Sigmoid colon (tissue), 7 donors: ENCODE measurements at regions of chr9 and their contacts with region 1.

Region 1: DNA sequence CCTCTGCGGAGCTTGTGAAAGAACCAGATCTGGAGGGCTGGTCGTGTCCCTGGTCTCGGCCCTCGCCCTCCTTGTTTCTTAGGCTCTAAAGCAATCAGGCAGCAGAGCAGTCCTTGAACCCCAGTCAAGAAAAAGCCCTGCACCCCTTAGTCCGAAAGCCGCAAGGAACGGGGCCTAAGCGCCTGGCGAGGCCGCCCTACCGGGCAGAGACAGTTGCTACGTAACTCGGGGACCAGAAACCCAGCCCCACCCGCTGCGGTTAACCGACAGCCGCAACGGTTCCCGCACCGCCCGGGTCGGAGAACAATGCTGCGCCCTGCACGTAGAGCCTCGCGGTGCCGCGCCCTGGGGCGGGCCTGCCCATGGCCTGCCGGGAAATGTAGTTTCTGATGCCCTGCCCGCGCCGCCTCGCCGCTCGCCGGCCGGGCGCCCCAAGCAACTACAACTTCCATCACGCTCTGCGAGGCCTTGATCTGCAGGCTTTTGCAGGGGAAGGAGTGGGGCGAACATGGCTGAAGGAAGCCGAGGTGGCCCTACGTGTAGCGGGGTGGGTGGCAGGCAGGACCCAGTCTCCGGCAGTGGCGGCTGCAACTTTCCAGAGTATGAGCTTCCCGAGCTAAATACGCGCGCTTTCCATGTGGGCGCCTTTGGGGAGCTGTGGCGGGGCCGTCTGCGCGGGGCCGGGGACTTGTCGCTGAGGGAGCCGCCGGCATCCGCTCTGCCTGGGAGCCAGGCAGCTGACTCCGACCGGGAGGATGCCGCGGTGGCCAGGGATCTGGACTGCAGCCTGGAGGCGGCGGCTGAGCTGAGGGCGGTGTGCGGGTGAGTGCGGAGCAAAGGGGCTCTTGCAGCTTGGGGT is at the start of gene SNAPC3:
- DNase-seq: peak; percentile 96
- H3K4me3 ChIP-seq: peak within 1 kb of the TSS; percentile 90 to 94 (median 90)
- H3K27ac ChIP-seq: peak within 1 kb of the TSS; percentile 85 to 94 (median 92)
- H3K4me1 ChIP-seq: peaks cover 0 to 38% (median 20%) of the 10 kb centered on the region in 4 donors
- H3K27me3 ChIP-seq: no peaks in the 10 kb centered on the region
- CTCF ChIP-seq: peak in 2 of 4 experiments; percentile 20 to 21
- EP300 ChIP-seq: peak in 2 of 4 donors; percentile 32 to 53
- POLR2A ChIP-seq: peak; percentile 31 to 60
- total RNA-seq, gene SNAPC3: 28.4 to 41.5 (median 32.5) TPM

Region 2: DNA sequence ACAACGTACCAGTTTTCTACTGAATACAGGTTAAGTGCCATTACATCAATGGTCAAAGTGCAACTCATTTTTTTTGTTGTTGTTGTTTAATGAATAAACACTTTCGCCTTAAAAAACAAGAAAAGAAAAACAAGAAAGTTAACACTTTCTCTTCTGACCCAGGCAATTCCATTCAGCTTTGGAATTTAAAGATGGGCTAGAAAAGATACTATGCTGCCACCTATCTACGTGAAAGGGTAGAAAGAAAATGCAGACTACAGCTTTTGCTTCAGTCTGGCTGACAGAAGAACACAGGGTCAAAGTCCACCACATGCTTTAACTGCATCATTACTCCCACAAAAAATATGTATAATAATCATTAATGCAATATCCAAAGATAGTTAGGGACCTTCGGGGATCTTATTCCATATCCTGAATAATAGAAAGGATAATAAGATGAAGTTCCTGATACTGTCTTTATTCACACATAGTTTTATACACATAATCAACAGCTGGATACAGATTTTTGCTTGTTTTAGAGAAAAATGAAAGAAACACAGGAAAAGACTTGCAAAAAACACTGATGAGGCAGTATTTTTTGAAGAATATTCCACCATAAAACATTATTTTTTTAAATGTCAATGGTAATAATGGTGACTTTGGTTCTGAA is 769.7 kb before region 1 on chr9:
- intact Hi-C with region 1: no loop called
- DNase-seq: no peak
- H3K4me3 ChIP-seq: no peak overlapping the region
- H3K27ac ChIP-seq: no peak overlapping the region
- H3K4me1 ChIP-seq: peaks cover 0 to 15% (median 3%) of the 10 kb centered on the region in 4 donors
- H3K27me3 ChIP-seq: no peaks in the 10 kb centered on the region
- CTCF ChIP-seq: peak; percentile 23 to 33 (median 26)
- EP300 ChIP-seq: no peak
- POLR2A ChIP-seq: no peak

Region 3: GRCh38 chr9:14912859-14913258 is 509.7 kb before region 1 on chr9:
- intact Hi-C with region 1: no loop called
- DNase-seq: no peak
- H3K4me3 ChIP-seq: no peak overlapping the region
- H3K27ac ChIP-seq: no peak overlapping the region
- H3K4me1 ChIP-seq: peaks cover 0 to 30% (median 17%) of the 10 kb centered on the region in 4 donors
- H3K27me3 ChIP-seq: no peaks in the 10 kb centered on the region
- CTCF ChIP-seq: no peak
- EP300 ChIP-seq: no peak
- POLR2A ChIP-seq: no peak

Region 4: DNA sequence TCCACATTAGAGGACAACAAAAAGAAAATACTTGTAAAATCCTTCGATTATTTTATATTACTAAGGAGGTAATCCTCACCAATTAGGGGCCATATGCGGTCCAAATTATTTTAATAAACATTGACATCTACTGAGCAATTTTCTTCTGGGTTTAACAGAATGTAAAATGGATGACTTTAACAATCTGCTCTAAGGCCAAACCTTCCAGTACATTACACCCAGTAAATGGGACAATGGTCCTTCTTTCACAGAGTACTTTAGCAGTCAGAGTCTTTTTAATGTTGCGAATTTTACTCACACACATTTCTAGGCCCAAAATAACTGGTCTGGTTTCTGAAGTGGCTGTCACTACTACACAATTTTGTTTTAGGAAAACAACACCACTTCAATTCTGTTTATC is 222.5 kb before region 1 on chr9:
- intact Hi-C with region 1: no loop called
- DNase-seq: no peak
- H3K4me3 ChIP-seq: no peak overlapping the region
- H3K27ac ChIP-seq: no peak overlapping the region
- H3K4me1 ChIP-seq: no peaks in the 10 kb centered on the region
- H3K27me3 ChIP-seq: no peaks in the 10 kb centered on the region
- CTCF ChIP-seq: no peak
- EP300 ChIP-seq: no peak
- POLR2A ChIP-seq: no peak

Region 5: GRCh38 chr9:15211160-15211814 is 211.3 kb before region 1 on chr9:
- intact Hi-C with region 1: loop called (anchors 2 kb)
- DNase-seq: peak; percentile 80
- H3K4me3 ChIP-seq: no peak overlapping the region
- H3K27ac ChIP-seq: peak overlapping the region; percentile 25 to 43 (median 28)
- H3K4me1 ChIP-seq: peaks cover 0 to 14% (median 4%) of the 10 kb centered on the region in 4 donors
- H3K27me3 ChIP-seq: no peaks in the 10 kb centered on the region
- CTCF ChIP-seq: peak; percentile 37 to 93 (median 85)
- EP300 ChIP-seq: peak in 1 of 4 donors; percentile 72
- POLR2A ChIP-seq: no peak

Region 6: DNA sequence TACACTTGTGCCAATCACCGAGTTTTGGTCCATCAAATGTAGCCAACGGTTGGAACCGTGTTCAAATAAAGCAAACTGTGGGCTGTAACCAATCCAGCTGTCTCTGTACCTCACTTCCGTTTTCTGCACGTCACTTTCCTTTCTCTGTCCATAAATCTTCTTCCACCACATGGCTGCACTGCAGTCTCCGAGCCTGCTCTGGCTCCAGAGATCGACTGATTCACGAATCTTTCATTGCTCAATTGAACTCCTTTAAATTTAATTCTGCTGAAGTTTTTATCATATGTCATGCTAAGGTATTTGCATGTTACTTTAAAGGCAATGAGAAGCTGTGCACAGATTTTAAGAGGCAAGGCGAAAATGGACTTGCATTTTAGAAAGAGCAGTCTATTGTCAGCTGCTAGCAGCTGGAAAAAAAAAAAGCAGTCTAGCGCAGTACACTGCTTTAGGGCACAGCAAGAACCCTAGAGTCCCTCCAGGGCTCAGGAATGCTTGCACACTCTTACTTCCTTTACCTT is 128.7 kb before region 1 on chr9:
- intact Hi-C with region 1: loop called (anchors 5 kb)
- DNase-seq: no peak
- H3K4me3 ChIP-seq: peak overlapping the region in 2 of 4 donors; percentile 11 to 21
- H3K27ac ChIP-seq: peak overlapping the region; percentile 81 to 83 (median 82)
- H3K4me1 ChIP-seq: peaks cover 0 to 38% (median 31%) of the 10 kb centered on the region in 4 donors
- H3K27me3 ChIP-seq: no peaks in the 10 kb centered on the region
- CTCF ChIP-seq: no peak
- EP300 ChIP-seq: no peak
- POLR2A ChIP-seq: no peak

Region 7: DNA sequence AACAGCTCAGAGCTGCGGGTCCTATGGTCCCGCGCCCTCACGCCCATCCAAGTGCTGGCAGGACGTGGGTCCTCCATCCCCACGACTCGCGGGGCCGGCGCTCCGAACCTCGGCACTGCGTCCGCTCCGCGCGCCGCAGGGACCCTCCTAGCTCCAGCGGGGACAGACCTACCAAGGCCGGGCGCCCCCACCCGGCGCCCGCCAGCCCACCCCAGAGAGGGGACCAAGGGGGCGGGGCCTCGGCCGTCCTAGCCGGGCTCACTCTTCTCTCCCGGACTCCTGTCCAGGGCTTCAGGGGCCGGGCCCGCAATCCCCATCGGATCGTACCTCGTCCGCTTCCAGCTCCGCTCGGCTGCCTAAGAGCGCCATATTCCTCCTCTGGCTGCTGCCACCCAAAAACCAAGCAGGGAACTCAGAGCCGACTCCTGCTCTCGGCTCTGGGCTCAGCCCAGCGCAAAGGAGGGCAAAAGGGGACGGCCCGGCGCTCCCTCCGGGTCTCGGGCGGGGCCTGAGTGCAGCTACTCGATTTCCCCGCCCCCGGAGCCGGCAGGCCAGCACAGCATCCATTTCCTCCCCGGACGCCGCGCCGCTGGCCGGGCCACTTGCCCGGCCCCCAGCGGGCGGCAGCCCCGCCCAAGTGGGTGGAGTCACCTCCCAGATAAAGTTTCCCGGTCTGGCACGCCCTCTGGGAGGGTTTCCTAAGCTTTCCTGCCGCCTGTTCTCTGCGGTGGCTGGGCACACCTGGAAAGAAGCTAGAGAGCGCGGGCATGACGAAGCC is 115.7 kb before region 1 on chr9 and contains the start of gene TTC39B:
- intact Hi-C with region 1: loop called (anchors 2 kb)
- DNase-seq: peak; percentile 96
- H3K4me3 ChIP-seq: peak within 1 kb of the TSS; percentile 91 to 97 (median 92)
- H3K27ac ChIP-seq: peak within 1 kb of the TSS; percentile 93 to 94 (median 93)
- H3K4me1 ChIP-seq: peaks cover 0 to 20% (median 4%) of the 10 kb centered on the region in 4 donors
- H3K27me3 ChIP-seq: no peaks in the 10 kb centered on the region
- CTCF ChIP-seq: no peak
- EP300 ChIP-seq: no peak
- POLR2A ChIP-seq: peak; percentile 80 to 84
- total RNA-seq, gene TTC39B: 9.1 to 15.8 (median 13.8) TPM

Region 8: GRCh38 chr9:15510789-15511575 is 88.4 kb after region 1 on chr9 and contains the start of gene PSIP1:
- intact Hi-C with region 1: loop called (anchors 5 kb)
- DNase-seq: peak; percentile 81
- H3K4me3 ChIP-seq: peak within 1 kb of the TSS; percentile 81 to 99 (median 96)
- H3K27ac ChIP-seq: peak within 1 kb of the TSS; percentile 88 to 96 (median 90)
- H3K4me1 ChIP-seq: peaks cover 0 to 27% (median 22%) of the 10 kb centered on the region in 4 donors
- H3K27me3 ChIP-seq: no peaks in the 10 kb centered on the region
- CTCF ChIP-seq: peak in 3 of 4 experiments; percentile 25 to 42 (median 40)
- EP300 ChIP-seq: no peak
- POLR2A ChIP-seq: no peak
- total RNA-seq, gene PSIP1: 65.7 to 89.1 (median 72.2) TPM

Region 9: DNA sequence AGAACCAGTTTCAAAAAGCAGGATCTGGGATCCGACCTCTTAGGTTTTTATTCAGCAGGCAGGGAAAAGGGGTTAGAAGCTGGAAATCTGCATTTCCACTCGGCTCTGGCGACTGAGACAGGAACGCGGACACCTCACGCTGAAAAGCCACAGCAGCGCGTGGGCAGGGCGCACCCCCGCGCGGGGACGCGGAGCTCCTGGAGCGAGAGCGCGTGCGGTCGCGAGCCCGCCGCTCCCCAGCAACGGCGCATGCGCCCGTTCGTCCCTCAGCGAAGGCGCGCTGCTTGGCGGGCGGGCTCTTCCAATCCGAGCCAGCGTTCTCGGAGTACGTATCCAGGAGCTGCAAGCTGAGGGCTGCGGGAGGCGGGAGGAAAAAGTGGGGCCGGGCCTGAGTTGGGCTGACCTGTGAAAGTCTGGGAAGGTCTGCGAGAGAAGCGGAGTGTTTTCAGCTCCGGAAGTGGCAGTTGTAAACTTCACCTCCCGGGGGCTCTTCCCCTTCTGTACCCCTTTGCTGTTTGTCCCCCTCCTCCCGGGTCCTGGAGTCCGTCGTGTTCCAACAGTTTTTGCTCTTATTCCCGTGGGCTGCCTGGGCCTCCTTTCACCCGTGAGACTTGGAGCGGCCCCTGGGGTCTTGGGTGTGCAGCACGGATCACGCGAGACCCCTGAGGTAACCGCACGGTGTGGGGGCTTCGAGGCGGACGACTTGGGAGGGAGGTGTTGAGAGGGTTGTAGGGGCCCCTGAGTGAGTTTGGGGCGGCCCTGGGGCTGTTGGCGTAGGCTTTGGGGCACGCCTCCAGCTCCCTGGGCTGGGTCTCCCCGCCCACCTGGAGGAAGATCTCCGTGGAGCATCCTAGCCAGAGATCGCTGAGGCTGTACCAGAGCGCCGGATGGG is 130.3 kb after region 1 on chr9 and contains the start of gene CCDC171:
- intact Hi-C with region 1: loop called (anchors 1 kb)
- DNase-seq: peak; percentile 98
- H3K4me3 ChIP-seq: peak within 1 kb of the TSS; percentile 66 to 85 (median 73)
- H3K27ac ChIP-seq: peak within 1 kb of the TSS; percentile 89 to 94 (median 91)
- H3K4me1 ChIP-seq: peaks cover 0 to 8% (median 6%) of the 10 kb centered on the region in 4 donors
- H3K27me3 ChIP-seq: no peaks in the 10 kb centered on the region
- CTCF ChIP-seq: no peak
- EP300 ChIP-seq: no peak
- POLR2A ChIP-seq: peak; percentile 23 to 41
- total RNA-seq, gene CCDC171: 2.9 to 6.1 (median 3.1) TPM